ENCODE measurements at regions of chr7 and their contacts with region 1.

Region 1: DNA sequence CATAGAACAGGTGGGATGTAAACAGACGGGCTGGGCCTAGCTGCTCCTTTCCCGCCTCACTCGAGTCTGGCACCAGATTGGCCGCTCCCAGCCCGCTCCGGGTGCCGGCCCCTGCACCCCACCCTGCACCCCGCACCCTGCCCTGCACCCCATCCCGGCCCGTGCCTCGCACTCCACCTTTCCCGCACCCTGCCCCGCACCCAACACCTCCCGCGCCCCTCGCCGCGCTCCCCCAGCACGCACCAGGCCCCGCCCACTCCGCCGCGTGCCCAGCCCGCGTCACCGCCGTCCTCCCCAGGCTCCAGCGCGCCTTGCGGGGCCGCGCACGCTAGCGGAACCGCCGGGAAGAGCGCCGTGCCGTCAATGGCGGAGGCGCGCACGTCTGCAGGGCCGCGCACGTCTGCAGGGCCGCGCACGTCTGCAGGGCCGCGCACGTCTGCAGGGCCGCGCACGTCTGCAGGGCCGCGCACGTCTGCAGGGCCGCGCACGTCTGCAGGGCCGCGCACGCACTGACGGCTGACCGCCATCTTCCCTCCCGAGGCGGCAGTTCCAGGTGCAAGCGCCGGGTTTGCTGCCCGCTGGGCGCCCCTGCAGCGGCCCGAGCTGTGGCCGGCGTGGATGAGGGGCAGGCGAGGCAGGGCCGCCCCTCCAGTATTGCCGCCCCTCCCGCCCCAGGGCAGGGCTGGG is at the start of gene UBE3C:
- DNase-seq: peak; percentile 88
- ATAC-seq: peak; percentile 84
- H3K4me3 ChIP-seq: peak within 1 kb of the TSS; percentile 93
- H3K27ac ChIP-seq: peak within 1 kb of the TSS; percentile 58
- H3K4me1 ChIP-seq: peaks cover 31% of the 10 kb centered on the region
- H3K27me3 ChIP-seq: no peaks in the 10 kb centered on the region
- CTCF ChIP-seq: no peak
- total RNA-seq, gene UBE3C: 83.1 and 86.6 TPM in 2 replicates

Region 2: GRCh38 chr7:156544919-156545723 is 593.4 kb before region 1 on chr7:
- CTCF ChIA-PET with region 1: no interaction called
- POLR2A ChIA-PET with region 1: no interaction called
- intact Hi-C with region 1: no loop called
- DNase-seq: no peak
- ATAC-seq: no peak
- H3K4me3 ChIP-seq: no peak overlapping the region
- H3K27ac ChIP-seq: no peak overlapping the region
- H3K4me1 ChIP-seq: no peaks in the 10 kb centered on the region
- H3K27me3 ChIP-seq: peaks cover 30% of the 10 kb centered on the region
- CTCF ChIP-seq: no peak

Region 3: GRCh38 chr7:156969972-156970420 is 168.6 kb before region 1 on chr7:
- CTCF ChIA-PET with region 1: interaction called, 4 read pairs
- POLR2A ChIA-PET with region 1: no interaction called
- intact Hi-C with region 1: loop called (anchors 1 kb)
- DNase-seq: peak; percentile 54
- ATAC-seq: peak; percentile 59
- H3K4me3 ChIP-seq: no peak overlapping the region
- H3K27ac ChIP-seq: no peak overlapping the region
- H3K4me1 ChIP-seq: peaks cover 5% of the 10 kb centered on the region; the same call in 1 of the 2 replicates
- H3K27me3 ChIP-seq: no peaks in the 10 kb centered on the region
- CTCF ChIP-seq: peak; percentile 50

Region 4: GRCh38 chr7:157022681-157023588 is 115.6 kb before region 1 on chr7:
- CTCF ChIA-PET with region 1: no interaction called
- POLR2A ChIA-PET with region 1: no interaction called
- intact Hi-C with region 1: loop called (anchors 10 kb)
- DNase-seq: no peak
- ATAC-seq: peak; percentile 16; the same call in 1 of the 2 replicates
- H3K4me3 ChIP-seq: no peak overlapping the region
- H3K27ac ChIP-seq: no peak overlapping the region
- H3K4me1 ChIP-seq: peaks cover 7% of the 10 kb centered on the region
- H3K27me3 ChIP-seq: peaks cover 81% of the 10 kb centered on the region
- CTCF ChIP-seq: no peak